ENCODE measurements at regions of chr3 and their contacts with region 1.

Region 1: GRCh38 chr3:72100601-72101187 is 315.7 kb upstream of the PROK2 start:
- DNase-seq: peak; percentile 98
- H3K4me3 Mint-ChIP-seq: peak overlapping the region; percentile 83
- H3K27ac Mint-ChIP-seq: peak overlapping the region; percentile 89
- H3K4me1 Mint-ChIP-seq: peaks cover 36% of the 10 kb centered on the region
- H3K27me3 Mint-ChIP-seq: no peaks in the 10 kb centered on the region

Region 2: GRCh38 chr3:71984843-71985613 is 115.7 kb before region 1 on chr3:
- intact Hi-C with region 1: loop called (anchors 2 kb)
- DNase-seq: peak; percentile 75
- H3K4me3 Mint-ChIP-seq: peak overlapping the region; percentile 74
- H3K27ac Mint-ChIP-seq: peak overlapping the region; percentile 87
- H3K4me1 Mint-ChIP-seq: peaks cover 49% of the 10 kb centered on the region
- H3K27me3 Mint-ChIP-seq: no peaks in the 10 kb centered on the region

Region 3: GRCh38 chr3:72060447-72061034 is 40.2 kb before region 1 on chr3:
- intact Hi-C with region 1: loop called (anchors 2 kb)
- DNase-seq: no peak
- H3K4me3 Mint-ChIP-seq: no peak overlapping the region
- H3K27ac Mint-ChIP-seq: peak overlapping the region; percentile 59
- H3K4me1 Mint-ChIP-seq: peaks cover 5% of the 10 kb centered on the region
- H3K27me3 Mint-ChIP-seq: no peaks in the 10 kb centered on the region

Region 4: DNA sequence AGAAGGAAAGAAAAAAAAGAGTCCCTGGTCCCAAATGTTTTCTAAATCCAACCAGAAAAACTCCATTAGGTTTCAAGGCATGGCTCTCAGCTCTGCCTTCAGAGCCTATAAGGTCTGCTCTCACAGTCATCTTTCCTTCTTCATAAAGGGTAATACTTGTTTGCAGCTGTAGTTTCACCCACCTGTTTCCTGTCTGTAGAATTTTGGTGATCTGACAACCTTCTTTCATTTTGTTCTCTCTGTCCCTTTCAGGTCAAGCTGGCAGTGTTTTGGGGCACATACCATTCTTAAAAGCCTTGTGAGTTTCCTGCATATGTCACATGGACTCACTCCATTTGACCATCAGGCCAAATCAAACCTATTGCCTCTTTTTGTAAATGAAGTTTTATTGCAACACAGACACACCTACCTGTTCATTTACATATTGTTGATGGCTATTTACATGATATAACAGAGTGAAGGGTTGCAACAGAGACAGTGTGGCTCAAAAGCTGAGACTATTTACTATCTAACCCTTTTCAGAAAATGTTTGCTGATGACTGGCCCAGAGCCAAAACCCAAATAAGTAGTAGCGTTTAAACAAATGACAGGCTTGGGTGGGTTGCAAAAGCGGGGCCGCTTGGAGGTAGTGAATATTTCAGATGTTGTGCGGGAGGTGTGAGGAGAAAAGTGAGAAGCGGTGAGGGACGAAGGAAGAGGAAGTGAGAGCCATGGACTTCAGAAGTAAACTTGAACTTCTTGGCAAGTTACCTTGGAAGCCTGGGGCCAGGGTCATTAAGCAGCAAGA is 23.0 kb before region 1 on chr3:
- intact Hi-C with region 1: loop called (anchors 2 kb)
- DNase-seq: no peak
- H3K4me3 Mint-ChIP-seq: no peak overlapping the region
- H3K27ac Mint-ChIP-seq: peak overlapping the region; percentile 8
- H3K4me1 Mint-ChIP-seq: peaks cover 26% of the 10 kb centered on the region
- H3K27me3 Mint-ChIP-seq: no peaks in the 10 kb centered on the region